Spleen (tissue), 13 donors: ENCODE measurements at regions of chr4 and their contacts with region 1.

Region 1: GRCh38 chr4:184745831-184746795 is 12.2 kb upstream of the CENPU start:
- DNase-seq: no peak
- H3K4me3 ChIP-seq: peak overlapping the region in 1 of 8 donors; percentile 39
- H3K27ac ChIP-seq: peak overlapping the region in 7 of 8 donors; percentile 30 to 80 (median 71)
- H3K4me1 ChIP-seq: peaks cover 0 to 36% (median 26%) of the 10 kb centered on the region in 6 donors
- H3K27me3 ChIP-seq: no peaks in the 10 kb centered on the region
- CTCF ChIP-seq: peak; percentile 42 to 79 (median 70)
- POLR2A ChIP-seq: no peak

Region 2: DNA sequence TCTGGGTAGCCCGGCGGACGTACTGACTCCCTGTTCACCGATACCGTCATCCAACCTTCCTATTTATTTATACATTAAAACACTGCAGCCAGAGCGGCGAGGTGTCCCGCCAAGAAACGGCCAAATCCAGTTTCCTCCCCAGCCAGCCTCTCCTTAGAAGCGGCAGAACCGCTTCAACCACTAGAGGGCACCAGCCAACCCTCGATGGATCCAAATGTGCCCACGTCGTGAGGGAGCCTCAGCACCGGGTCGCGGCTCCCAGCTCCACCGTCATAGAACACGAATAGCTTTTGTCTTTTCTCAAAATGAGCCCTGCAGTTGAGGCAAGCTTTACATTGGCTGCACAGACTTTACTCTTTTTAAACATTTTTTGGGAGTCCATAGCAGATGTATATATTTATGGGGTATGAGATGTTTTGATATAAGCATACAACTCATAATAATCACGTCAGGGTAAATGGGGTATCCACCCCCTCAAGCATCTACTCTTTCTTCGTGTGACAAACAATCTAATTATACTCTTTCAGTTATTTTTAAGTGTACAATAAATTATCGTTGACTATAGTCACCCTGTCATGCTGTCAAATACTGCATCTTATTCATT is 259.2 kb after region 1 on chr4:
- intact Hi-C with region 1: loop called (anchors 10 kb)
- DNase-seq: peak; percentile 92
- H3K4me3 ChIP-seq: peak overlapping the region in 4 of 8 donors; percentile 1 to 52 (median 16)
- H3K27ac ChIP-seq: no peak overlapping the region
- H3K4me1 ChIP-seq: peaks cover 0 to 14% (median 11%) of the 10 kb centered on the region in 6 donors
- H3K27me3 ChIP-seq: peaks cover 0 to 72% (median 10%) of the 10 kb centered on the region in 7 donors
- CTCF ChIP-seq: peak; percentile 63 to 96 (median 87)
- POLR2A ChIP-seq: no peak

Region 3: GRCh38 chr4:185096032-185096653 is 350.0 kb after region 1 on chr4:
- intact Hi-C with region 1: loop called (anchors 10 kb)
- DNase-seq: no peak
- H3K4me3 ChIP-seq: no peak overlapping the region
- H3K27ac ChIP-seq: no peak overlapping the region
- H3K4me1 ChIP-seq: no peaks in the 10 kb centered on the region
- H3K27me3 ChIP-seq: peaks cover 0 to 13% (median 0%) of the 10 kb centered on the region in 7 donors
- CTCF ChIP-seq: peak in 9 of 11 experiments; percentile 10 to 70 (median 60)
- POLR2A ChIP-seq: no peak